A549 (cell line): ENCODE measurements at regions of chr17 and their contacts with region 1.

Region 1: GRCh38 chr17:64635647-64636307 is 26.3 kb downstream of the SMURF2 start:
- DNase-seq: peak in 1 of 2 experiments; percentile 18
- ATAC-seq: no peak
- H3K4me3 ChIP-seq: no peak overlapping the region
- H3K27ac ChIP-seq: peak overlapping the region; percentile 23 to 60; a peak in 5 of 6 replicates
- H3K4me1 ChIP-seq: peaks cover 25% of the 10 kb centered on the region
- CTCF ChIP-seq: no peak
- EP300 ChIP-seq: no peak
- POLR2A ChIP-seq: no peak
- RAD21 ChIP-seq: no peak

Region 2: DNA sequence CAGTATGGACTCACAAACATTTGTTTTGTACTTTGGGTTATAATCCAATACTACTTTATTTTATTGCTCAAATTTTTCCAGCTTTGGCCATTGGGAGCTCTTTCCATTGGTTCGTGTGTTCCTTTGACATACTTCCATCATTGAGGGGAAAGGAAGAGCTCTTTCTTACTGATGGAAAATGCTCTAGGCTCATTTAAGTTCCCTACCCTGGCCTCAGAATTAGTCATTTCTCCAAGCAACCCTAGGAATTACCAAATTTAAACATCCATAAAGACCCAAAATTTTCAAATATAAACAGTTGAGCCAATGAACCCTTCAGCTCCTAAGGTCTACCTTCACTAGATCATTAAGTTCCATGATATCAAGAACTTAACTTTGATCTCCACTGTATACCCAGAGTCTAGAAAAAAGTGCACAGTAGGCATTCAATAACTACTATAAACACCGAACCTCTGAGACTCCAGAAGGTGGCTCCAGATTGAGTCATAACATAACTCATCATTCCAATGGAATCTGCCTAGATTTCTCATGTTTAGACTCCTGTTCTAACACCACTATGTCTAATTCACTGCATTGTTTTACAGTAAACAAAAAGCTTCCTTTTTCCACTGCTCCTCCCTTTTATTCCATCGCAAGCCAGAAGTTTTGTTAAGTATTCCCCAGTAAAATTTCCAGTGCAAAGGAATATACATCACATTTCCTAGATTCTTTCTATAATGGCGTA is 12.7 kb before region 1 on chr17:
- CTCF ChIA-PET with region 1: interaction called, 11 read pairs
- POLR2A ChIA-PET with region 1: no interaction called
- DNase-seq: peak; percentile 61 to 68
- ATAC-seq: peak; percentile 86
- H3K4me3 ChIP-seq: no peak overlapping the region
- H3K27ac ChIP-seq: peak overlapping the region in 1 of 2 experiments; percentile 48; a peak in 2 of 6 replicates
- H3K4me1 ChIP-seq: peaks cover 41% of the 10 kb centered on the region
- CTCF ChIP-seq: no peak
- EP300 ChIP-seq: no peak
- POLR2A ChIP-seq: no peak
- RAD21 ChIP-seq: peak in 1 of 2 experiments; percentile 16; a peak in 1 of 5 replicates

Region 3: DNA sequence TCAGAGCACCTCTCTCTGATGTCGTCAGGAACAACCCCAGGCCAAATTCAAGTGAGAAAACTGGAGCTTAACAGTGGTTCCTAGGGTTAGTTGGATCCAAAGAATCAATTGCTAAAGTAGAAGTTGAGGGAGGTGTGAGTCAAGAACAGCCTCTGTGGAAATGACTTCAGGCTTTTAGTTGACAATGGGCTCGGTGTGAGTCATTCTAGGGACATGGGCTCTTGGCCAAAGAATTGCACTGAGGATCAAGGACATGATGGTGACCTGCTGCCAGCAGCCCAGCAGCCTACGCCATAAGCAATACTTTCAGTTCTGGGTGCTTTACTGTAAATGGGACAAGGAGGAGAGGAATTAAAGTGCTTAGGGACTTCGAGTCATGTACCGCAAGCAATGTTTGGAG is 58.4 kb after region 1 on chr17:
- CTCF ChIA-PET with region 1: no interaction called
- POLR2A ChIA-PET with region 1: no interaction called
- DNase-seq: peak; percentile 66 to 87
- ATAC-seq: peak; percentile 75 to 82
- H3K4me3 ChIP-seq: no peak overlapping the region
- H3K27ac ChIP-seq: peak overlapping the region; percentile 37 to 71; a peak in 5 of 6 replicates
- H3K4me1 ChIP-seq: peaks cover 29% of the 10 kb centered on the region
- CTCF ChIP-seq: no peak
- EP300 ChIP-seq: no peak
- POLR2A ChIP-seq: no peak
- RAD21 ChIP-seq: peak in 1 of 2 experiments; percentile 15; a peak in 2 of 5 replicates